Pancreas (tissue), 10 donors: ENCODE measurements at regions of chr16 and their contacts with region 1.

Region 1: DNA sequence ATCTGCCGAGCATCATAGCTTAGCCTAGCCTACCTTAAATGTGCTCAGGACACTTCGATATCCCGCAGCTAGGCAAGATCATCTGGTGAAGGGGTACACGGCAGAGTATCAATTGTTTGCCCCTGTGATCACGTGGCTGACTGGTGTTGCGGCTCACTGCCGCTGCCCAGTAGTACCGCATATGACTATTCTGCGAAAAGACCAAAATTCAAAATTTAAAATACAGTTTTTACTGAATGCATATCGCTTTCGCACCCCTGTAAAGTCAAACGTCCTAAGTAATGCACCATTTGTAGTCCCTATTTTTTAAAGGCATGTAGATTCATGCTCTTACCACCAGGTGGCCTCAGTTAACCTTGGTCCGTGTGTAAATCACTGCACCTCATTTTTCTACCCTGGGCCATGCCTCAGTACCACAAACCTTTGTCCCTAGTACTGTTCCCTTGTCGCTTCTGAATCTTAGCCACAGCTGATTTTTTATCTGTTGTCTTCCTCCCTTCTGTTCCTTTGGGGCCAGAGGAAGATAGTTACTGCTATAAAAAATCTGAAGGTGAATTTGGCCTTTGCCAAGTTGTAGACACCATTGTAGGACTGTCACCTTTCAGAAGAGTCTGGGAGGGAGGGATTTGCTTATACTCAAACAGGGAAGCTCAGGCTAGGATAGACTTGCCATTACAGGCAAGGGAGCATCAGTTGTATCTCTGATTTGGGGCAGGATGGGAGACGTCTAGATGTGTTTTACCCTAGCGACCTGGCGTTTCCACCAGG is 34.4 kb downstream of the WWP2 start:
- DNase-seq: peak in 2 of 6 donors; percentile 17 to 48
- ATAC-seq: peak; percentile 83 to 95 (median 93)
- H3K4me3 ChIP-seq: no peak overlapping the region
- H3K27ac ChIP-seq: no peak overlapping the region
- H3K4me1 ChIP-seq: peaks cover 0 to 3% (median 0%) of the 10 kb centered on the region in 3 donors
- H3K27me3 ChIP-seq: no peaks in the 10 kb centered on the region
- CTCF ChIP-seq: peak; percentile 72 to 85 (median 78)

Region 2: DNA sequence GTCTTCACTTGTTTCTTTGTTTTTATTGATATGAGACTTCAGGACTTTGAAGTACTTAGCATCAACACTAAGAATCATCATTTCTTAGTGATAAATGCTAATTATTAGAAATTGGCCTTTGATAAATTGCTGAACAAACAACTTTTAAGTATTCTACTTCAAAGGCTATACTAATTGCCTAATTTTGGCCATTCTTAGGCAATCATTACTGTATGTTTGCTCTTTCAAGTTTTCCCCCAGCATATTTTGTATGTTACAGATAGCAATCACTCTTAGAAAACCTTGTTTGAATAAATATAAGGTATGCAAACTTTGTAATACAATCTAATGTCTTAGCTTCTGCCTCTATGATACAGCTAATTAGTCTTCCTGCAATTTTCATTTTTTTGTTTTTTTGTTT is 116.2 kb before region 1 on chr16:
- intact Hi-C with region 1: no loop called
- DNase-seq: no peak
- ATAC-seq: no peak
- H3K4me3 ChIP-seq: no peak overlapping the region
- H3K27ac ChIP-seq: no peak overlapping the region
- H3K4me1 ChIP-seq: no peaks in the 10 kb centered on the region
- H3K27me3 ChIP-seq: no peaks in the 10 kb centered on the region
- CTCF ChIP-seq: no peak

Region 3: DNA sequence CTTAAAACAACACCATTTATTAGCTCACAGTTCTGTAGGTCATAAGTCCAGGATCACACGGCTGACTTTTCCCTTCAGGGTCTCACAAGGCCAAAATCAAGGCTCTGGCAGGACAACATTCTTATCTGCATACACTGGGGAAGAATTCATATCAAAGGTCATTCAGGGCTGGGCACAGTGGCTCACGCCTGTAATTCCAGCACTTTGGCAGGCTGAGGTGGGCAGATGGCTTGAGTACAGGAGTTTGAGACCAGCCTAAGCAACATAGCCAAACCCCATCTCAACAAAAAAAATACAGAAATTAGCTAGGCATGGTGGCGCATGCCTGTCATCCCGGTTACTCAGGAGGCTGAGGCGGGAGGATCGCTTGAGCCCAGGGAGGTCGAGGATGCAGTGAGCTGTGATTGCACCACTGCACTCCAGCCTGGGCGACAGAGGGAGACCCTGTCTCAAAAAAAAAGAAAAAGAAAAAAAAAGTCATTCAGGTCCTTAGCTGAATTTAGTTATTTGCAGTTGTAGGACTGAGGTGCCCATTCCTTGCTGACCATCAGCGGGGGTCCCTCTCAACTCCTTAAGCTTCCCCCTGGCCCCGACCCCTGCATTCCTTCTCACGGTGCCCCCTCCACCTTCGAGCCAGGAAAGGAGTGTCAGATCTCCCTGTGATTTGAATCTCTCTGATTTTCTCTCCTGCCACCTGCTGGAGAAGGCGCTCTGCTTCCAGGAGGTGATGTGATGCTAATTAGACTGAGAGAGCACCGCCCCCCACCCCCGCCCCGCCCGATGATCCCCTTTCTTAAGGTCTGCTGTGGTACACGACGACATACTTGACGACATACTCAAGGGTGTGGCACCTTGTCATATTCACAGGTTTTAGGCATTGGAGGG is 62.8 kb after region 1 on chr16:
- intact Hi-C with region 1: loop called in 1 of 3 experiments (anchors 10 kb)
- DNase-seq: peak in 5 of 6 donors; percentile 43 to 77 (median 61)
- ATAC-seq: peak; percentile 62 to 77 (median 70)
- H3K4me3 ChIP-seq: no peak overlapping the region
- H3K27ac ChIP-seq: peak overlapping the region in 3 of 4 donors; percentile 6 to 84 (median 83)
- H3K4me1 ChIP-seq: peaks cover 30 to 35% (median 31%) of the 10 kb centered on the region in 3 donors
- H3K27me3 ChIP-seq: no peaks in the 10 kb centered on the region
- CTCF ChIP-seq: peak in 1 of 4 donors; percentile 26

Region 4: GRCh38 chr16:69930117-69930776 is 133.7 kb after region 1 on chr16:
- intact Hi-C with region 1: loop called in 2 of 3 experiments (anchors 5 kb)
- DNase-seq: peak in 3 of 6 donors; percentile 31 to 58 (median 57)
- ATAC-seq: peak; percentile 72 to 87 (median 83)
- H3K4me3 ChIP-seq: no peak overlapping the region
- H3K27ac ChIP-seq: no peak overlapping the region
- H3K4me1 ChIP-seq: no peaks in the 10 kb centered on the region
- H3K27me3 ChIP-seq: no peaks in the 10 kb centered on the region
- CTCF ChIP-seq: peak; percentile 50 to 69 (median 64)